ENCODE measurements at regions of chr12 and their contacts with region 1.

Region 1: GRCh38 chr12:70290116-70290515 is 46.9 kb downstream of the CNOT2 start:
- DNase-seq: no peak
- ATAC-seq: no peak
- H3K4me3 ChIP-seq: no peak overlapping the region
- H3K27ac ChIP-seq: no peak overlapping the region
- H3K4me1 ChIP-seq: no peaks in the 10 kb centered on the region
- H3K27me3 ChIP-seq: no peaks in the 10 kb centered on the region
- CTCF ChIP-seq: no peak

Region 2: GRCh38 chr12:69961246-69961645 is 328.9 kb before region 1 on chr12:
- CTCF ChIA-PET with region 1: no interaction called
- POLR2A ChIA-PET with region 1: interaction called, 12 read pairs
- in situ Hi-C with region 1: no loop called
- intact Hi-C with region 1: no loop called
- DNase-seq: no peak
- ATAC-seq: no peak
- H3K4me3 ChIP-seq: no peak overlapping the region
- H3K27ac ChIP-seq: no peak overlapping the region
- H3K4me1 ChIP-seq: no peaks in the 10 kb centered on the region
- H3K27me3 ChIP-seq: no peaks in the 10 kb centered on the region
- CTCF ChIP-seq: no peak

Region 3: DNA sequence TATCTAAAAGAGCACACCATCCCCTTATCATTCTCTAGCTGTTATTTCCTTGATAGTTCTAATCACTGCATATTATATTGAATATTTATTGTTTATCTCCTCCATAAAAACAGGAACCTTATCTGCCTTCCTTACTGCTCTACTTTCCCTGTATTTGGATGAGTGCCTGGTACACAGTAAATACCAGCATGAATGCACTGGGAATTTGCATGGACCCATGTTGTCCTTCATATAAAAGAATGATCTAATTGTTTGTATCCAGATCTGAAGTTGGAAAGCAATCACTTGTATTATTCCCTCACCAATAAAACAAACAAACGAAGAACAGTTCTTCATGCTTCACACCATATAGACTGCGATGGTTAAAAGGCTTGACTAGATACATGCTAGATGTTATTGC is 62.2 kb before region 1 on chr12:
- CTCF ChIA-PET with region 1: no interaction called
- POLR2A ChIA-PET with region 1: no interaction called
- in situ Hi-C with region 1: no loop called
- intact Hi-C with region 1: no loop called
- DNase-seq: no peak
- ATAC-seq: no peak
- H3K4me3 ChIP-seq: no peak overlapping the region
- H3K27ac ChIP-seq: no peak overlapping the region
- H3K4me1 ChIP-seq: no peaks in the 10 kb centered on the region
- H3K27me3 ChIP-seq: no peaks in the 10 kb centered on the region; the same call in 1 of the 2 replicates
- CTCF ChIP-seq: no peak

Measured in Panc1 (cell line).